ENCODE measurements at regions of chr18 and their contacts with region 1.

Region 1: DNA sequence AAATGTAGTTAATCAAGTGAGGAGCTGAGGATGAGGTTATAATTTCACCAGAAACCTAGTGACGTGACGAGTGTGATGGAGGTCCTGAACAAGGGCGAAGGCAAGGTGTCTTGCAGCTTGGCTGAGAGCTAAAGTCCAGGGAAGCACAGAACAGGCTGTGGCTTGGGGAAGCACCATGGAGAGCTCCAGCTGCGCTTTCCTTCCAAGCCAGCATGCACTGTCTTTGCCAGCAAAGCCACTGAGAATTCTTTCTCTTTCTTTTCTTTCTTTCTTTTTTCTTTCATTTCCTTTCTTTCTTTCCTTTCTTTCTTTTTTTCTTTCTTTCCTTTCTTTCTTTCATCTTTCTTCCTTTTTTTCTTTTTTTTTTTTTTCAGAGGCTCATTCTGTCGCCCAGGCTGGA is 239.3 kb downstream of the FBXO15 start:
- DNase-seq: no peak
- H3K4me3 ChIP-seq: no peak overlapping the region
- H3K27ac ChIP-seq: no peak overlapping the region
- H3K27me3 ChIP-seq: no peaks in the 10 kb centered on the region
- CTCF ChIP-seq: no peak

Region 2: GRCh38 chr18:73980289-73980979 is 72.1 kb after region 1 on chr18:
- CTCF ChIA-PET with region 1: interaction called, 10 read pairs
- POLR2A ChIA-PET with region 1: no interaction called
- DNase-seq: no peak
- H3K4me3 ChIP-seq: no peak overlapping the region
- H3K27ac ChIP-seq: no peak overlapping the region
- H3K27me3 ChIP-seq: no peaks in the 10 kb centered on the region
- CTCF ChIP-seq: peak; percentile 49